IMR-90 (cell line): ENCODE measurements at regions of chr12 and their contacts with region 1.

Region 1: DNA sequence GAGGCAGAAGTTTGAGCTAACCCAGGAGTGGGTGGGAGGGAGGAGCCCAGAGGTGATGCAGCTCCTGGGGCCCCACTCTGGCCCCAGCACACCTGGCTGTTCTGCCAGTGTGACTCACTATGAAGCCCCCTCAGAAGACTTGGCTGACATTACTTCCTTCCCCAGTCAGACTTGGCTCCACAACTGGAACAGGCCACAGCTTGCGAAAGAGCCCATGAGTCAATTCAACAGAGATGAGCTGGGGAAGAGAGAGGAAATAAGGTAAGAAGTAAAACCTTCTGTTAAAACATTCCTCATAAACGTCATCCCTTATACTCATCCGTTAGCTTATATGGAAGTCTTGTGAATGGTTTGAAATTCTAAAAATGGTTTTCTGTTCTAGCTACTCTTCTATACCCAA is 245.9 kb downstream of the ADAMTS20 start:
- DNase-seq: peak; percentile 99
- ATAC-seq: peak; percentile 51
- H3K4me3 ChIP-seq: no peak overlapping the region
- H3K27ac ChIP-seq: peak overlapping the region; percentile 47
- H3K4me1 ChIP-seq: peaks cover 19% of the 10 kb centered on the region
- H3K27me3 ChIP-seq: no peaks in the 10 kb centered on the region
- CTCF ChIP-seq: no peak
- POLR2A ChIP-seq: no peak
- RAD21 ChIP-seq: no peak

Region 2: GRCh38 chr12:43292699-43293098 is 13.4 kb before region 1 on chr12:
- CTCF ChIA-PET with region 1: no interaction called
- POLR2A ChIA-PET with region 1: no interaction called
- dilution Hi-C with region 1: no loop called
- in situ Hi-C with region 1: no loop called
- intact Hi-C with region 1: loop called (anchors 1 kb)
- DNase-seq: peak; percentile 79
- ATAC-seq: peak; percentile 63
- H3K4me3 ChIP-seq: no peak overlapping the region
- H3K27ac ChIP-seq: peak overlapping the region; percentile 97
- H3K4me1 ChIP-seq: peaks cover 23% of the 10 kb centered on the region
- H3K27me3 ChIP-seq: no peaks in the 10 kb centered on the region
- CTCF ChIP-seq: no peak
- POLR2A ChIP-seq: no peak
- RAD21 ChIP-seq: no peak

Region 3: DNA sequence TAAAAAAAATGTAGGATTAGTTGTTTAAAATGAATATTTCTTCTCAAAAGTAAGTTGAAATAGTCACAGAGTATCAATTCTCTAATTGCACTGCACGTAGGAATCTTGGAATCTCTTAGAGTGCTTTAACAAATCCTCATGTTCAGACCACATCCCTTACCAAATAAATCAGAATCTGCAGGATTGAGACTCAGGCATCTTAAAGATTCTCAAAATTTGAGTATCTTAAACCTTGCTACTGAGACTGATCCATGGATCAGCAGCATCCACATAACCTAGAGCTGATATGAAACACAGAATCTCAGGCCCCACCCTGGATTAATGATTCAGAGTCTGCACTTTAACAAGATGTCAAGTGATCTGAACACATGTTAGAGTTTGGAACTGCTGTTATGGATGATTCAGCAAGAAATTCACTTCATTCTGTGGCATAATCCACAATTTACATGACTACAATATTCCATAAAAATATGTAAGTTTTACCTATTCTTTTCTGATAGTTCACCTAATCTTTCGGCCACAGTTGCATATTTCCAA is 187.3 kb after region 1 on chr12:
- CTCF ChIA-PET with region 1: no interaction called
- POLR2A ChIA-PET with region 1: no interaction called
- dilution Hi-C with region 1: no loop called
- in situ Hi-C with region 1: no loop called
- intact Hi-C with region 1: no loop called
- DNase-seq: no peak
- ATAC-seq: no peak
- H3K4me3 ChIP-seq: no peak overlapping the region
- H3K27ac ChIP-seq: no peak overlapping the region
- H3K4me1 ChIP-seq: no peaks in the 10 kb centered on the region
- H3K27me3 ChIP-seq: no peaks in the 10 kb centered on the region; the same call in 1 of the 2 replicates
- CTCF ChIP-seq: no peak
- POLR2A ChIP-seq: no peak
- RAD21 ChIP-seq: no peak